ENCODE measurements at regions of chr17 and their contacts with region 1.

Region 1: GRCh38 chr17:48047741-48048383 is at the start of gene NFE2L1:
- DNase-seq: peak; percentile 97 to 99
- ATAC-seq: peak; percentile 93 to 99 (median 95)
- H3K4me3 ChIP-seq: peak within 1 kb of the TSS; percentile 69
- H3K4me3 Mint-ChIP-seq: peak within 1 kb of the TSS; percentile 98
- H3K27ac ChIP-seq: peak within 1 kb of the TSS; percentile 88
- H3K27ac Mint-ChIP-seq: peak within 1 kb of the TSS; percentile 96 to 97
- H3K4me1 ChIP-seq: peaks cover 32% of the 10 kb centered on the region
- H3K4me1 Mint-ChIP-seq: peaks cover 55 to 64% of the 10 kb centered on the region in 2 donors
- H3K27me3 ChIP-seq: no peaks in the 10 kb centered on the region
- H3K27me3 Mint-ChIP-seq: no peaks in the 10 kb centered on the region
- CTCF ChIP-seq: no peak
- total RNA-seq, gene NFE2L1: 38.6 to 53.4 (median 47.5) TPM

Region 2: DNA sequence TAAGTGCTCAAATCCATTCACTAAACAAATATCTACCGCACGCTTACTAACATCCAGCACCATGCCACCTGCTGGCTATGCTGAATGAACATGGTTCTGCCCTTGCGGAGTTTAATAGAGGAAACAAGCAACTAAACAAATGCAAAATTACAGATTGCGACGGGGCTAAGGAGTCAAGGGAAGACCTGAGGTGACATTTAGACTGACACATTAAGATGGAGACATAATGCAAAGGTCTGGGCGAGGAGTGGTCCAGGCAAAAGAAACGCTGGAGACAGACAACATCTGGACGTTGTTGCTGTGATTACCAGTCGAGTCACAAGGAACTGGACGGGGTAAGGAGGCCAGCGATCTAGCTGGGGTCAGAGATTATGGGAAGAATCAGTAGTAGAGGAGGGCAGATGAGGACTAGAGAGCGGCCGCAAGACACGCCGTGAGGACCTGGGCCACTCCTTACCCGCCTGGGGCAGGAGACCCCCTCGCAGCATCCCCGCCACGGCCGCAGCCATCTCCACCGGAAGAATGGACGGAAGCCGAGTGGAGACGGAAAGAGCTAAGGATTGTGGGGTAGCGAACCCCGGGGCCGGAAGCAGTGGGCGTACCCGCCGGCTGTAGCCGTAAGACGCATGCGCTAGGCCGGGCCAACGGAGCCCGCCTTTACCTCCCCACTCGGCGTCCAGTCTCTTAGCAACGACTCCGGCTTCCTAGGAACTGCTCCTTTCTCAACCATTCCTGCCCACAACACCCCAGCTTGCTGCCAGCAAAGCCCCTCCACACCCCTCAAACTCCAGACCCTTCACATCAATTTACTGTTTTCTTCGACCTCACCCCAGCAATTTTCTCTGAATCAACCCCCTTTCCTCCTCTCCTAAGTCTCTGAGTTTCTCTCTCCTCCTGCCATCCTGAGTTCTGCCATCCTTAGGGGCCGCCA is 216.6 kb before region 1 on chr17 and contains the starts of genes LRRC46 and MRPL10:
- intact Hi-C with region 1: loop called (anchors 10 kb)
- DNase-seq: peak; percentile 92 to 96
- ATAC-seq: peak; percentile 58 to 78 (median 66)
- H3K4me3 ChIP-seq: peak within 1 kb of the TSS; percentile 70
- H3K4me3 Mint-ChIP-seq: peak within 1 kb of the TSS; percentile 96
- H3K27ac ChIP-seq: peak within 1 kb of the TSS; percentile 93
- H3K27ac Mint-ChIP-seq: peak within 1 kb of the TSS; percentile 96 to 98
- H3K4me1 ChIP-seq: peaks cover 41% of the 10 kb centered on the region
- H3K4me1 Mint-ChIP-seq: peaks cover 37 to 45% of the 10 kb centered on the region in 2 donors
- H3K27me3 ChIP-seq: no peaks in the 10 kb centered on the region
- H3K27me3 Mint-ChIP-seq: no peaks in the 10 kb centered on the region
- CTCF ChIP-seq: no peak
- total RNA-seq, gene LRRC46: 1.7 to 3.1 (median 2.7) TPM
- total RNA-seq, gene MRPL10: 106 to 232 (median 144) TPM

Region 3: GRCh38 chr17:47970704-47971463 is 77.0 kb before region 1 on chr17 and contains the start of gene CDK5RAP3:
- intact Hi-C with region 1: loop called (anchors 2 kb)
- DNase-seq: peak; percentile 98 to 99
- ATAC-seq: peak; percentile 97 to 100 (median 98)
- H3K4me3 ChIP-seq: peak within 1 kb of the TSS; percentile 90
- H3K4me3 Mint-ChIP-seq: peak within 1 kb of the TSS; percentile 92
- H3K27ac ChIP-seq: peak within 1 kb of the TSS; percentile 73
- H3K27ac Mint-ChIP-seq: peak within 1 kb of the TSS; percentile 83 to 87
- H3K4me1 ChIP-seq: peaks cover 15% of the 10 kb centered on the region
- H3K4me1 Mint-ChIP-seq: peaks cover 14 to 24% of the 10 kb centered on the region in 2 donors
- H3K27me3 ChIP-seq: no peaks in the 10 kb centered on the region
- H3K27me3 Mint-ChIP-seq: peaks cover 0 to 4% of the 10 kb centered on the region in 2 donors
- CTCF ChIP-seq: peak; percentile 97
- total RNA-seq, gene CDK5RAP3: 289 to 300 (median 292) TPM

Region 4: DNA sequence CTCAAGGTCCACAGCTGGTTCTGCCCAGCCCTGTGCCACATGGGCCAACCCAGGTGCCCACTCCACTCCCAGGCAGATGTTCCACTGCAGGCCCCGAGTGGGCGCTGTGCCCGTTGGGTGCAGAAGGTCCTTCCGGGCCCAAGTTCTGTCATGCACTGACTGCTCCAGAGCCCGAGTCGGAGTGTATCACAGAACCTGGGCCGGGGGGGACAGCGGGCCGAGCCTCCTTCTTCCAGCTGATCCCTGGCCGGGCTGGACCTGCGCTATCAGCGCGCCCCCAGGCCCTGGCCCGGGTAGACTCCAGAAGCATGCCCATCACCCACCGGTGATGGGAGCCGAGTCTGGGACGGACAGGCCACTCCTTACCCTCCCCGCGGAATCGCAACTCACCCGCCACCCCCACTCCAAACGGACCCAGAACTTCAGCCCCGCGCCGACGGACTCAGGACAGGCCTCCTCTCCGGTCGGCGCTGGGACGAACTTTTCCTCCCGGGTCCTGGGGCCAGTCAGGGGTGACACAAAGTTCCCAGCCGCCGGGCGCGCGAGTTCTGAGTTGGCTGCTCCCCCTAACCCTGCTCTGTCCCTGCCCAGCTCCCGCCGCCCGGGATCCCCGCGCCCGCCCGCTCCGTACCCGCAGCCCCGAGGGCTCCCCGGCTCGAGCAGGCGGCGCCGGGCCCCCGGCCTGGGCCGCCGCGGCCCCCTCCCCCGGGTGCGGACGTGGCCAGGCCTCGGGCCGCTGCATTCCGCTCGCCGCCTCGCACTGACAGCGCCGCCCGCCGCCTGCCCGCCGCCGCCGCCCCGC is 10.6 kb before region 1 on chr17 and contains the start of gene COPZ2:
- intact Hi-C with region 1: loop called (anchors 1 kb)
- DNase-seq: peak; percentile 67 to 83
- ATAC-seq: peak; percentile 92 to 97 (median 96)
- H3K4me3 ChIP-seq: peak within 1 kb of the TSS; percentile 84
- H3K4me3 Mint-ChIP-seq: peak within 1 kb of the TSS; percentile 94
- H3K27ac ChIP-seq: no peak within 1 kb of the TSS
- H3K27ac Mint-ChIP-seq: peak within 1 kb of the TSS; percentile 50 to 82
- H3K4me1 ChIP-seq: peaks cover 14% of the 10 kb centered on the region
- H3K4me1 Mint-ChIP-seq: peaks cover 9 to 10% of the 10 kb centered on the region in 2 donors
- H3K27me3 ChIP-seq: peaks cover 4% of the 10 kb centered on the region
- H3K27me3 Mint-ChIP-seq: peaks cover 0 to 17% of the 10 kb centered on the region in 2 donors
- CTCF ChIP-seq: peak; percentile 89
- total RNA-seq, gene COPZ2: 15.9 to 19.1 (median 16.5) TPM

Region 5: GRCh38 chr17:48441231-48441711 is 393.4 kb after region 1 on chr17:
- intact Hi-C with region 1: loop called (anchors 5 kb)
- DNase-seq: peak; percentile 22 to 89
- ATAC-seq: peak; percentile 58 to 78 (median 77)
- H3K4me3 ChIP-seq: no peak overlapping the region
- H3K4me3 Mint-ChIP-seq: peak overlapping the region; percentile 86
- H3K27ac ChIP-seq: peak overlapping the region; percentile 87
- H3K27ac Mint-ChIP-seq: peak overlapping the region; percentile 96 to 98
- H3K4me1 ChIP-seq: peaks cover 96% of the 10 kb centered on the region
- H3K4me1 Mint-ChIP-seq: peaks cover 86 to 87% of the 10 kb centered on the region in 2 donors
- H3K27me3 ChIP-seq: no peaks in the 10 kb centered on the region
- H3K27me3 Mint-ChIP-seq: no peaks in the 10 kb centered on the region
- CTCF ChIP-seq: no peak

Measured in natural killer cell (primary cell).